ENCODE measurements at regions of chr3 and their contacts with region 1.

Region 1: DNA sequence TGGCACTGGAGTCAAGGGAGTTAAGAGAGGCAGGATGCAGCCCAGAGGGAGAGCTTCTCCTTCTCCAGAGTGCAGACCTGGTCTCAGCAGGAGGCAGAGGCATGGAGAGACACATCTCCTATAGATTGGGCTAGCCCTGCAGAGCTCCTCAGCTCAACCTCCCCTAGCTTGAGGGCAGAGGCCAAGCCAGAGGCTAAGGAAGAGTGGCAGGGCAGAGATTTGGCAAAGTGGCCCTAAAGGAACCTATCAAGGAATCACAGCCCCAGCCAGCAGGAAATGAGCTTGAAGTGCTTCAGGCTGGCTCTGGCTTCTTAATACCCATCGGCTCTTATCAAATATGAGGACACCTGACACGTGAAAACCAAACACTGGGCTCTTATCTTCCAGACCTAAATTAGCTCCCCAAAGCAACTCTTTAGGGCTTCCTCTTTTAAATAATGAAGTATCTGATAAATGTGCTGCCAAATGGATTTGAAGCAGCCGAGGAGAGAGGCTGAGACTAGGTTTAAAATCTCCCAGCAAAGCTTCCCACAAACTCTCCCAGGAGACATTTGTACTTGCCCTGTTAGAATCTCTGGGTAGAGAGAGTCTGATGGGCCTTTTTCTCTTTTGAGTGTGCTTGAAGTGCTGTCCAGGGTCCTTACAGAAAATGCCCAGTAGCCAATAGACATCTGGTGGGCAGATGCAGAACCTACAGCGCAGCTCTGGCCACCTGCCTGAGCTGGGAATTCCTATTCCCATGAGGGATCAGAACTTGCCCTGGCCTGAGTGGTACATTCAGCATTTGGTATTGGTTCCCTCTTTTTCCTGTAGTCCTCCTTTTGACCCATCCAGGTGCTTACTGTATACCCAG is 271.4 kb downstream of the CLSTN2 start:
- DNase-seq: no peak

Region 2: GRCh38 chr3:140128631-140129030 is 77.8 kb before region 1 on chr3:
- intact Hi-C with region 1: loop called (anchors 2 kb)
- DNase-seq: no peak